Posterior cingulate gyrus (tissue), 11 donors: ENCODE measurements at regions of chr3 and their contacts with region 1.

Region 1: GRCh38 chr3:119498186-119498987 is at the start of gene TIMMDC1:
- DNase-seq: peak; percentile 97 to 100 (median 99)

Region 2: GRCh38 chr3:119463171-119464169 is 34.9 kb before region 1 on chr3 and contains the start of gene TMEM39A:
- intact Hi-C with region 1: loop called (anchors 1 kb)
- DNase-seq: peak; percentile 99 to 100 (median 99)

Region 3: GRCh38 chr3:119469381-119470189 is 28.8 kb before region 1 on chr3:
- intact Hi-C with region 1: loop called (anchors 2 kb)
- DNase-seq: peak in 1 of 10 donors; percentile 19

Region 4: DNA sequence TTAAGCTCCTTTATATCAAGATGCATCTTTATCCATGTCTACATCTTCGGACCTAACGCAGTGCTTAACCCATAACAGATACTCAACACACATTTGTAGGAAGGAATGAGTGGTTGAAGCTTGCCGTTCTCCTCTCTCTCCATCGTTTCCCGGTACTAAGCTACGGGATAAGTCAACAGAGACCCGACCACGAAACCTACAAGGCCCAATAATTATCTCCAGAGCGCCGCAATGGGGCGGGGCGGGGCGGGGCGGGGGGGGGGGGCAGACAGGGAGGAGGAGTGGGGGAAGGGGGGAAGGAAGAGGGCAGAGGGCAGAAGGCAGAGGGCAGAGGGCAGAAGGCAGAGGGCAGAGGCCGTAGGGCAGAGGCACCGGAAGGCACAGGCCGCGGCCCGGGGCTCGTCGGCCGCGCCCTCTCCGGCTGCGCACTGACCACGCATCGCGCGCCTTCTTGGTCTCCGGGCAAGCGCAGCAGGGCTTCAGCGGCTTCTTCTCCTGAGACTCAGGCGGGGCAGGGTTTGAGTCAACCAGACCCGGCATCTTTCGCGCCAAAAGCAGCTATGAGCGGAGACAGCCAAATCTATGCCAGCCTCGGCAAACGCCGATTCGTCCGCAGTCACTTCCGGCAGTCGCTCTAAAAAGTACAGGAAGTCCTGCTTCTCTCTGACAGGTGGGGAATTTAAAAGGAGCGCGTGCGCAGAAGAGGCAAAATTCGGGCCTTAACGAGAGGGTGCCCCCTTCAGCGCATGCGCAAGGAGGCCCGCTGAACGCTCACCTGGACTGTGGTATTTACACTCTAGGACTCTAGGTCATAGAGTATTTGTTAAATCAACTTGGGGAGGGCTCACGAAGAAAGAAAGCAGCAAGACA is 178.6 kb after region 1 on chr3 and contains the start of gene COX17:
- intact Hi-C with region 1: loop called (anchors 1 kb)
- DNase-seq: peak; percentile 84 to 98 (median 90)